CD4-positive, alpha-beta T cell (primary cell): ENCODE measurements at regions of chr1 and their contacts with region 1.

Region 1: DNA sequence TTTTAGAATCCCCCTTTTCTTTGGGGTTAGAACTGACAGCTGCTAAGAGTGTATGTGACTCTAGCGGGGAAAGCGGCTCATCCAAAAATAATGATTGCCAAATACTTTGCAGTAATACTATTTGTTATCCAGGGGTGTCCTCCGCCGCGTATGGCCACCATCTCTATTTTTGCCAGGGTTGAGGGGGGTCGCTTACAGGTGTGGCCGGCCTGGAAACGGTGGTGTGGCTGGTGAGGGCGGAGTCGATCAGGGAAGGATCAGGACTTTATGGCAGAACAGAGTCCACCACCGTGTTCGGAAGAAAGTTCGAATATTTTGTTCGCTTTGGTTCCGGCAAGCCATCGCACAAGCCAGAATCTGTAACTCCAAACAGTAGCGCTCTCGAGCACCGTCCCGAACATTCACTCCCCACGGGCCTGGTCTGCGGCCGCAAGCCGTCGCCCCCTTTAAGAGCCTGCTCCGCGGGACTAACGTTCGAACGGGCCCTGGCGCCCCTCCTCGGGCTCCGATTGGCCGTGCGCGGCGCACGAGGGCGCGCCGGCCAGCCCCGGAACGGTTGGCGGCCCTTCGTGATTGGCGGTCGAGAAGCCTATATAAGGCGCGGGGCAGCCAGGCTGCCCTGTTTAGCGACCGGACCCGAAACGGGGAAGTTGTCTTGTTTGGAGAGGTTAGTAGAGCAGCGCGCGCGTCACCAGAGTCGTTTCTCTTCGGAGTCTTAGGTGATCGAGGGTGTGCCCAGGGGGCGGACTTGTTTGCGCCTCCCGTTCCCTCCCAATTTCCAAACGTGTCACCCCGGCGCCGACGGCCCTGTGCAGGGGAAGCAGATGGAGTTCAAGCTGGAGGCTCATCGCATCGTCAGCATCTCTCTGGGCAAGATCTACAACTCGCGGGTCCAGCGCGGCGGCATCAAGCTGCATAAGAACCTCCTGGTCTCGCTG is at the start of gene IER5:
- DNase-seq: peak; percentile 89 to 98 (median 94)
- ATAC-seq: peak; percentile 70
- H3K4me3 ChIP-seq: peak within 1 kb of the TSS; percentile 90
- H3K4me3 Mint-ChIP-seq: peak within 1 kb of the TSS; percentile 99
- H3K27ac ChIP-seq: peak within 1 kb of the TSS; percentile 95 to 97
- H3K27ac Mint-ChIP-seq: peak within 1 kb of the TSS; percentile 97
- H3K4me1 ChIP-seq: peaks cover 13% of the 10 kb centered on the region
- H3K4me1 Mint-ChIP-seq: peaks cover 53% of the 10 kb centered on the region
- H3K27me3 ChIP-seq: no peaks in the 10 kb centered on the region
- H3K27me3 Mint-ChIP-seq: no peaks in the 10 kb centered on the region
- CTCF ChIP-seq: no peak
- total RNA-seq, gene IER5: 53.8 to 54.1 TPM

Region 2: DNA sequence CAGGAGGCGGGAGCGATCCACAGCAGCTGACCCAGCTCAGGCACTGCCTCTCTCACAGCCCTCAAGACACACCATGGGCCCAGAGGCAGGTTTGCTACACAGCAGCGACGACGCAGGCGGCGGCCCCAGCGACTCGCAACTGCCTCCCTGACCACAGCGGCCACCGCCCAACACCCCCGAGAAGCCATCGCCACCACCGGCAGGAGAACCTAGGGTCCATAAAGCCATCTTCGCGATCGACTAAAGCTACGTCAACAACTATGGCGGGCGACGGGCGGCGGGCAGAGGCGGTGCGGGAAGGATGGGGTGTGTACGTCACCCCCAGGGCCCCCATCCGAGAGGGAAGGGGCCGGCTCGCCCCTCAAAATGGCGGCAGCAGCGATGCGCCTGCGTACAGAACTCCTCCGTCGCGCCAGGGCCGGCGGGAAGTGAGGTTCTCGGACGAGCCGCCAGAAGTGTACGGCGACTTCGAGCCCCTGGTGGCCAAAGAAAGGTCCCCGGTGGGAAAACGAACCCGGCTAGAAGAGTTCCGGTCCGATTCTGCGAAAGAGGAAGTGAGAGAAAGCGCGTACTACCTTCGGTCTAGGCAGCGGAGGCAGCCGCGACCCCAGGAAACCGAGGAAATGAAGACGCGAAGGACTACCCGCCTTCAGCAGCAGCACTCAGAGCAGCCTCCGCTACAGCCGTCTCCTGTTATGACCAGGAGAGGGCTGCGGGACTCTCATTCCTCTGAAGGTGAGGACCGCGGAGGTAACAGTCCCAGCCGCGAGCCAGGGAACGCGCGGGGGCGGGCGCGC is 1205.9 kb before region 1 on chr1 and contains the start of gene TOR1AIP1:
- CTCF ChIA-PET with region 1: no interaction called
- POLR2A ChIA-PET with region 1: interaction called, 7 read pairs
- intact Hi-C with region 1: loop called in 1 of 2 experiments (anchors 10 kb)
- DNase-seq: peak; percentile 95 to 99 (median 96)
- ATAC-seq: peak; percentile 73
- H3K4me3 ChIP-seq: peak within 1 kb of the TSS; percentile 83
- H3K4me3 Mint-ChIP-seq: peak within 1 kb of the TSS; percentile 98
- H3K27ac ChIP-seq: peak within 1 kb of the TSS; percentile 99
- H3K27ac Mint-ChIP-seq: peak within 1 kb of the TSS; percentile 100
- H3K4me1 ChIP-seq: peaks cover 26% of the 10 kb centered on the region
- H3K4me1 Mint-ChIP-seq: peaks cover 60% of the 10 kb centered on the region
- H3K27me3 ChIP-seq: no peaks in the 10 kb centered on the region
- H3K27me3 Mint-ChIP-seq: no peaks in the 10 kb centered on the region
- CTCF ChIP-seq: peak; percentile 16
- total RNA-seq, gene TOR1AIP1: 93.8 to 94.4 TPM

Region 3: GRCh38 chr1:181033799-181034451 is 54.4 kb before region 1 on chr1 and contains the start of gene MR1:
- CTCF ChIA-PET with region 1: interaction called, 6 read pairs
- POLR2A ChIA-PET with region 1: interaction called, 33 read pairs
- intact Hi-C with region 1: loop called in 1 of 2 experiments (anchors 1 kb)
- DNase-seq: peak in 8 of 14 experiments; percentile 19 to 92 (median 42)
- ATAC-seq: peak; percentile 97
- H3K4me3 ChIP-seq: peak within 1 kb of the TSS; percentile 78
- H3K4me3 Mint-ChIP-seq: peak within 1 kb of the TSS; percentile 97
- H3K27ac ChIP-seq: peak within 1 kb of the TSS; percentile 87 to 97
- H3K27ac Mint-ChIP-seq: peak within 1 kb of the TSS; percentile 92
- H3K4me1 ChIP-seq: peaks cover 47% of the 10 kb centered on the region
- H3K4me1 Mint-ChIP-seq: peaks cover 64% of the 10 kb centered on the region
- H3K27me3 ChIP-seq: no peaks in the 10 kb centered on the region
- H3K27me3 Mint-ChIP-seq: no peaks in the 10 kb centered on the region
- CTCF ChIP-seq: no peak
- total RNA-seq, gene MR1: 16.2 to 18.1 TPM

Region 4: DNA sequence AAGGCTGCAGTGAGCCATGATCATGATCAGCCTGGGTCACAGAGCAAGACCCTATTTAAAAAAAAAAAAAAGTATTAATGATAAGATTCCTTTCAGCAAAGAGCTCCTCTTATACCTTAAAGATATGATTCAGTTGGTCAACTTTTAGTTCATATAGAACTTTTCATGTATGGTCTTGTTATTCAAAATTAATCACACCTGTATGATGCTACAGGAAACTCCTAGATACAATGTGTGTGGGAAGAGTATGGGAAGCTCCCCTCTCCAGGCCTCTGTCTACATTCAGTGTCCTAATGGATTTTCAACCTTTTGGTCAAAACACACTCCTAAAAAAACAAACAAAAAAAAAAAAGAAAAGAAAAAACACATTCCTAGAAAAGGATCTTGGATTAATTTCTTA is 37.4 kb before region 1 on chr1:
- CTCF ChIA-PET with region 1: no interaction called
- POLR2A ChIA-PET with region 1: no interaction called
- intact Hi-C with region 1: no loop called
- DNase-seq: no peak
- ATAC-seq: no peak
- H3K4me3 ChIP-seq: no peak overlapping the region
- H3K4me3 Mint-ChIP-seq: no peak overlapping the region
- H3K27ac ChIP-seq: no peak overlapping the region
- H3K27ac Mint-ChIP-seq: no peak overlapping the region
- H3K4me1 ChIP-seq: no peaks in the 10 kb centered on the region
- H3K4me1 Mint-ChIP-seq: no peaks in the 10 kb centered on the region
- H3K27me3 ChIP-seq: no peaks in the 10 kb centered on the region
- H3K27me3 Mint-ChIP-seq: no peaks in the 10 kb centered on the region
- CTCF ChIP-seq: no peak

Region 5: DNA sequence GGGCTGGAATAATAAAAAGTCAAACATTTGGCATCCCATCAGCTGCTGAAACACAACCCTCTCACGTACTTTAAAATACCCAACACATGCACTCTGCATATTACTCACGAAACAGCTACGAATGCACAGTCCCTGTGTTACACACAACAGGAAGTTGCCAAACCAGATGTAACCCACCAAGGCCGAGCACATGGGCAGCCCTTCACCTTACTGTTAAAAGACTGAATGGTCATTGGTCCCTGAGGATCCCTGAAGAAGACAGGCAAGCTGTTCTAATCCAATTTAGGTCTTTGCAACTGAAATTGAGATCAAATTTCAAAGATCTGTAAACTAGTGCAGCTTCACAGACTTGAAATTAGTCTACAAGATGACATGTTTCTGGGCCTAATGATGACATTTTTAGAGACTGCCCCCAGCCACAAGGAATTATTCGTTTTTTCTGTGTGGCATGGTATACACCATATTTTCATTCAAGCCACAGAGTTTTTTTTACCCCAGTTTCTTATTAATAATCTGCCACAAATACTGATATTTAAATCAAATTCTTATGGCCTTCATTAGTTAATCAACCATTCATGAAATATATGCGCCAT is 25.4 kb before region 1 on chr1:
- CTCF ChIA-PET with region 1: interaction called, 5 read pairs
- POLR2A ChIA-PET with region 1: interaction called, 12 read pairs
- intact Hi-C with region 1: no loop called
- DNase-seq: peak in 6 of 14 experiments; percentile 10 to 62 (median 46)
- ATAC-seq: peak; percentile 43
- H3K4me3 ChIP-seq: peak overlapping the region; percentile 26
- H3K4me3 Mint-ChIP-seq: peak overlapping the region; percentile 58
- H3K27ac ChIP-seq: peak overlapping the region in 1 of 2 donors; percentile 59
- H3K27ac Mint-ChIP-seq: peak overlapping the region; percentile 53
- H3K4me1 ChIP-seq: peaks cover 13% of the 10 kb centered on the region
- H3K4me1 Mint-ChIP-seq: peaks cover 26% of the 10 kb centered on the region
- H3K27me3 ChIP-seq: no peaks in the 10 kb centered on the region
- H3K27me3 Mint-ChIP-seq: no peaks in the 10 kb centered on the region
- CTCF ChIP-seq: no peak

Region 6: GRCh38 chr1:181142096-181142958 is 54.0 kb after region 1 on chr1:
- CTCF ChIA-PET with region 1: interaction called, 54 read pairs
- POLR2A ChIA-PET with region 1: interaction called, 22 read pairs
- intact Hi-C with region 1: loop called (anchors 1 kb)
- DNase-seq: peak; percentile 74 to 92 (median 86)
- ATAC-seq: peak; percentile 100
- H3K4me3 ChIP-seq: no peak overlapping the region
- H3K4me3 Mint-ChIP-seq: no peak overlapping the region
- H3K27ac ChIP-seq: no peak overlapping the region
- H3K27ac Mint-ChIP-seq: no peak overlapping the region
- H3K4me1 ChIP-seq: peaks cover 31% of the 10 kb centered on the region
- H3K4me1 Mint-ChIP-seq: peaks cover 36% of the 10 kb centered on the region
- H3K27me3 ChIP-seq: no peaks in the 10 kb centered on the region
- H3K27me3 Mint-ChIP-seq: no peaks in the 10 kb centered on the region
- CTCF ChIP-seq: peak; percentile 97

Region 7: DNA sequence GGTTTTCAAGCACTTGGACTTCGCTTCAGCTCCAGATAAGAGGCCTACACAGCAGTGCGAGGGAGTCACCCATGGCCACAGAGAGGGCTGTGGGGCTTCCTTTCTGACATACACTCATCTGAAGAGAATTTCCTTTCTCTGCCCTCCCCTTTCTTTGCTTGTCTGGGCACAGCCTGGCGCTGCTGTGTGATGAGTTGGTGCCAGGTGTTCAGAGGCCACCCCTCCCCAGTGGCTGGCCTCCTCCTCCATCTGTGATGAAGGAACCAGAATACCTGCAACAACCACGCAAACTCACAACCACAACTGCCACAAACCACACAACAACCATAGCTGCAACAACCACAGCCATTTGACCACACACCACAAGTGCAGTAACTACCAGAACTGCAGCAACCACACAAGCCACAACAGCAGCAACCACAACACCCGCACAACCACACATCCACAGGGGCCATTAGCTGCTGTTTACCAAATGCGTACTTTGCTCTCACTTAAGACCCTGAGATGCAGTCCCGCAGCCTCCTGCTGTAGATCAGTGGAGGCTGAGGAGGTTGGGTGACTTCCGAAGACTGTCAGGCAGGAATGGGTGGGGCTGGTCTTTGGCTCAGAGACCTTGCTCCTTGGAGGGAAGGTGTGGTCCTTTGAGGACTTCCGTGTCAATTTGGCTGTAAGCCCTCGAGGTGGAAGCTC is 71.2 kb after region 1 on chr1:
- CTCF ChIA-PET with region 1: interaction called, 11 read pairs
- POLR2A ChIA-PET with region 1: interaction called, 19 read pairs
- intact Hi-C with region 1: no loop called
- DNase-seq: peak; percentile 30 to 81 (median 49)
- ATAC-seq: peak; percentile 78
- H3K4me3 ChIP-seq: no peak overlapping the region
- H3K4me3 Mint-ChIP-seq: peak overlapping the region; percentile 64
- H3K27ac ChIP-seq: peak overlapping the region in 1 of 2 donors; percentile 52
- H3K27ac Mint-ChIP-seq: peak overlapping the region; percentile 89
- H3K4me1 ChIP-seq: peaks cover 43% of the 10 kb centered on the region
- H3K4me1 Mint-ChIP-seq: peaks cover 45% of the 10 kb centered on the region
- H3K27me3 ChIP-seq: no peaks in the 10 kb centered on the region
- H3K27me3 Mint-ChIP-seq: no peaks in the 10 kb centered on the region
- CTCF ChIP-seq: no peak

Region 8: GRCh38 chr1:181397845-181398244 is 309.5 kb after region 1 on chr1:
- CTCF ChIA-PET with region 1: no interaction called
- POLR2A ChIA-PET with region 1: interaction called, 3 read pairs
- intact Hi-C with region 1: loop called in 1 of 2 experiments (anchors 2 kb)
- DNase-seq: peak in 10 of 14 experiments; percentile 7 to 75 (median 18)
- ATAC-seq: peak; percentile 17
- H3K4me3 ChIP-seq: no peak overlapping the region
- H3K4me3 Mint-ChIP-seq: peak overlapping the region; percentile 47
- H3K27ac ChIP-seq: peak overlapping the region; percentile 33 to 66
- H3K27ac Mint-ChIP-seq: no peak overlapping the region
- H3K4me1 ChIP-seq: peaks cover 69% of the 10 kb centered on the region
- H3K4me1 Mint-ChIP-seq: peaks cover 51% of the 10 kb centered on the region
- H3K27me3 ChIP-seq: no peaks in the 10 kb centered on the region
- H3K27me3 Mint-ChIP-seq: no peaks in the 10 kb centered on the region
- CTCF ChIP-seq: no peak

Region 9: DNA sequence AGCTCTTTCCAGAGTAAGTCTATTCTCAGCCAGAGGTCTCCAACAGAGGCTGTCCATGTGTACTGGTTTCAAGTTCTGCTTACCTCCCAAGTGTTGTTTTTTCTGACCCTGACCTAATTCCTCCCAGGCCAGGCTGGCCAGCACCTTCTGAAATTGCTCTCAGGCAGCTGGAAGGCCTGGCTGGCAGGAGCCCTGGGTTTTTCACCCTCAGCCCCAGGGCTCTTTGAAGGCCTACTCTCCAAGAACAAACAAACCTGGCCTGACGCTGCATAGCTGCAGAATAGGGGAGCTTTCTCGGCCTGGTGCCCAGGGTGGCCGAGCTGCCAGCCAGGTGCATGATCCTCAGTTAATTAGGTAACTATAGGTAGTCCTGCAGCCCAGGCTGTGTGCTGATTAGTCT is 542.5 kb after region 1 on chr1:
- CTCF ChIA-PET with region 1: no interaction called
- POLR2A ChIA-PET with region 1: no interaction called
- intact Hi-C with region 1: no loop called
- DNase-seq: no peak
- ATAC-seq: no peak
- H3K4me3 ChIP-seq: no peak overlapping the region
- H3K4me3 Mint-ChIP-seq: no peak overlapping the region
- H3K27ac ChIP-seq: no peak overlapping the region
- H3K27ac Mint-ChIP-seq: no peak overlapping the region
- H3K4me1 ChIP-seq: no peaks in the 10 kb centered on the region
- H3K4me1 Mint-ChIP-seq: no peaks in the 10 kb centered on the region
- H3K27me3 ChIP-seq: peaks cover 0 to 2% of the 10 kb centered on the region in 2 experiments
- H3K27me3 Mint-ChIP-seq: peaks cover 35% of the 10 kb centered on the region
- CTCF ChIP-seq: no peak